ENCODE measurements at regions of chr17 and their contacts with region 1.

Region 1: GRCh38 chr17:64984851-64985521 is 65.7 kb upstream of the LRRC37A3 start:
- DNase-seq: peak; percentile 71
- H3K4me3 Mint-ChIP-seq: peak overlapping the region; percentile 70
- H3K27ac Mint-ChIP-seq: peak overlapping the region; percentile 98
- H3K4me1 Mint-ChIP-seq: peaks cover 57% of the 10 kb centered on the region
- H3K27me3 Mint-ChIP-seq: no peaks in the 10 kb centered on the region

Region 2: DNA sequence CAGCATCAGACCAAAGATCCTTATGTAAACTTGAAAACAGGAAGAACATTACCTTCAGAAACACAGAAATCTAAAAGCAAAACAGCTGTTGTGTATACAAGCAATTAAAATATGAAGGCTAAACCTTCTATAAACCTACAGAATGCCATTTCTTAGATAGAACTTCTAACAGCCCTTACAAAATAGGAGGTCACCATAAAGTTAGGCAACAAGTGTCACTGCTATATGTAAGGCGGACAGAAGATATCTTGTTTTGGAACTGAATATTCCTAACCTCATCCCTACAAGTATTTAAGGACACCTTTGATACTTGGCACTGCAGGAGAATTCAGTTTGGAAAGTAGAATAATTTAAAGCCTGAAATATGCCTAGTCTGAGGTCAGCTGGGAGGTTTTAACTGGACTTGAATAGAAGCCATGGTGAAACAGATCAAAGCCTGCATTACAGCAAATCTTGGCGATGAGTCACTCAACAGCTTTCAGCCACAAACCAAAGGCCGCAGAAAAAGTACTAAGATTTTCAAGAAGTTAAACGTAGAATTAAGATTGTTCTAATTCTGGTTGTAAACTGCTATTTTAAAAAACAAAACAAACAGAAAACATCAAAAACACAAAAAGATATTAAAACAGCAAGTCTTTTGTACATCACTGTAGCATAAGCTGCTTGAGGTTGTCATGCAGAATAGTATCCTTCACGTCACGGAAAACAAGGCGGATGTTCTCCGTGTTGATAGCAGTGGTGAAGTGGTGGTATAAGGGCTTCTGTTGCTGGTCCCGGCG is 28.8 kb after region 1 on chr17:
- CTCF ChIA-PET with region 1: no interaction called
- POLR2A ChIA-PET with region 1: interaction called, 20 read pairs
- DNase-seq: peak; percentile 58
- H3K4me3 Mint-ChIP-seq: no peak overlapping the region
- H3K27ac Mint-ChIP-seq: peak overlapping the region; percentile 44
- H3K4me1 Mint-ChIP-seq: peaks cover 61% of the 10 kb centered on the region
- H3K27me3 Mint-ChIP-seq: no peaks in the 10 kb centered on the region

Region 3: DNA sequence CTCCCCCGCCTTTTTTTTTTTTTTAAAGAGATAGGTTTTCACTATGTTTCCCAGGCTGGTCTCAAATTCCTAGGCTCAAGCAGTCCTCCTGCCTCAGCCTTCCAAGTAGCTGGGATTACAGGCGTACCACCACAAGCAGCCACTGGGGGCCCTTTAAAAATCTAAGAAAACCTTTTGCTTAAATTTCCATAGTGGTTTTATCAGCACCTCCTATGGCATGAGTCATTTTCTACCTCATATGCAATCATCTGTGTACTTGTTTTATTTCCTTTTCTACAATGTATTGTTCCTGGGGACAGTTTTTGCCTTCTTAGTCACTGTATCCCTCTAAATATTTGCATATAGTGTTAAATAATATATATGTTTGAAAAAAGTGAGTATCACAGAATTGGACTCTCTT is 42.3 kb after region 1 on chr17:
- CTCF ChIA-PET with region 1: no interaction called
- POLR2A ChIA-PET with region 1: interaction called, 16 read pairs
- DNase-seq: peak; percentile 59
- H3K4me3 Mint-ChIP-seq: peak overlapping the region; percentile 63
- H3K27ac Mint-ChIP-seq: peak overlapping the region; percentile 85
- H3K4me1 Mint-ChIP-seq: peaks cover 84% of the 10 kb centered on the region
- H3K27me3 Mint-ChIP-seq: no peaks in the 10 kb centered on the region

Region 4: DNA sequence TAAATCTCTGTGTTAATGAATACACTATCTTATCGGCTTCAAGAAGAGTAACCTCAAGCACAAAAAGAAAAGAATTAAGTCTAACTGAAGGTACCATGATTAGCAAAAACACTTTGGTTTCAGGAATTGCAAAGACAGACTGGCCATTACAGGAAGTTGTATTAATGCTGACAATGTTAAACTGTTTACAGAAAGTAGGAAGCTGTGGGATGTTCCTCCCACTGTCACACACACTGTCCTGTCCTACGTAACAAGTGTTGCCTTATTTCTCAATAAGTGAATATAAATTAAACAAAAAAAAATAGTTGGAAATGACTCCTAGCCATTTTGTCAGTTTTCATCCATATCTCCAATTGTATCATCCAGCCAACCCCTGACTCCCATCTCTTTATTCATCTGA is 63.0 kb after region 1 on chr17:
- CTCF ChIA-PET with region 1: interaction called, 3 read pairs
- POLR2A ChIA-PET with region 1: interaction called, 18 read pairs
- DNase-seq: no peak
- H3K4me3 Mint-ChIP-seq: no peak overlapping the region
- H3K27ac Mint-ChIP-seq: peak overlapping the region; percentile 59
- H3K4me1 Mint-ChIP-seq: peaks cover 79% of the 10 kb centered on the region
- H3K27me3 Mint-ChIP-seq: no peaks in the 10 kb centered on the region

Region 5: GRCh38 chr17:65145743-65146142 is 160.8 kb after region 1 on chr17:
- CTCF ChIA-PET with region 1: no interaction called
- POLR2A ChIA-PET with region 1: no interaction called
- DNase-seq: no peak
- H3K4me3 Mint-ChIP-seq: no peak overlapping the region
- H3K27ac Mint-ChIP-seq: no peak overlapping the region
- H3K4me1 Mint-ChIP-seq: peaks cover 21% of the 10 kb centered on the region
- H3K27me3 Mint-ChIP-seq: peaks cover 3% of the 10 kb centered on the region

Region 6: GRCh38 chr17:65173284-65173793 is 188.4 kb after region 1 on chr17:
- CTCF ChIA-PET with region 1: no interaction called
- POLR2A ChIA-PET with region 1: interaction called, 12 read pairs
- DNase-seq: peak; percentile 94
- H3K4me3 Mint-ChIP-seq: no peak overlapping the region
- H3K27ac Mint-ChIP-seq: no peak overlapping the region
- H3K4me1 Mint-ChIP-seq: peaks cover 41% of the 10 kb centered on the region
- H3K27me3 Mint-ChIP-seq: no peaks in the 10 kb centered on the region